Activated T-helper 2 cell treated with anti-CD3 and anti-CD28 coated beads, Interferon-gamma antibody, Interleukin-2, Interleukin-4, amounts not matched to agents 10 μg/mL and 5 μg/mL and 100 μg/mL, durations not matched to agents 14 hours and 24 hours and 36 hours (primary cell): ENCODE measurements at regions of chr17 and their contacts with region 1.

Region 1: DNA sequence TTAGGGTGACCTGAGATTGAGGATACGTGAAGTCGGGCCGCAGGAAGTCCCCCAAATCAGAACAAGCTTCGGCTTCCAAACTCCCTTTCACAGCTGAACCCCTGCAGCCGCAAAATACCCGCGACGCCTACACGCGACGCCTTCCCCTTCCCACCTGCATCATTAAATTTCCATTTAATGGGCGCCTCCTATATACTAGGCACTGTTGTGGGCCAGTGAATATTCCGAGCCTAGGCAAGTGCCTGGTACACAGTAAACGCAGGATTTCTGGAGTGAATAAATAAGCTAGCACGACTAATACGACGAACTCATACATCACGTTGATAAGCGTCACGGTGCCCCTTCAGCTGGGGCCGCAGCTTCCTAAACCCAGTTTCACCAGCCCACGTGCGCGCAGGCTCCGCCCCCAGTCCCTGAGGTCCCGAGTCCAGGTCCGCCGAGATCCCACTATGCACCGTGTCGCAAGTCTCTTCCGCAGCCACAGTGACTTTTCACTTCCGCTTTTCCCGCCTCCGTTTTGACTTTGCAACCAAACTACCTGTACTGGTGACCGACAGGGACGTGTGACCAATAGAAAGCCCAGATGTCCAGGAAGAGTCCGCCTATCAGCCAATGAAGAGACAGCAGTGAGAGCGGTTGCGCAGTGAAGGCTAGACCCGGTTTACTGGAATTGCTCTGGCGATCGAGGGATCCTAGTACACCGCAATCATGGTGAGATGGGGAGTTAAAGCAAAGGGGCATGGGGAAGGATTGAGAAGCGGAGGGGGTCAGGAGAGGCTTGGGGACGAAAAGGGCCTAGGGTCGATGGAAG is at the start of gene PSMB3:
- DNase-seq: peak; percentile 97
- H3K4me3 Mint-ChIP-seq: peak within 1 kb of the TSS; percentile 100
- H3K27ac Mint-ChIP-seq: peak within 1 kb of the TSS; percentile 99
- H3K4me1 Mint-ChIP-seq: peaks cover 31% of the 10 kb centered on the region
- H3K27me3 Mint-ChIP-seq: peaks cover 15% of the 10 kb centered on the region
- total RNA-seq, gene PSMB3: 337 and 342 TPM in 2 replicates

Region 2: DNA sequence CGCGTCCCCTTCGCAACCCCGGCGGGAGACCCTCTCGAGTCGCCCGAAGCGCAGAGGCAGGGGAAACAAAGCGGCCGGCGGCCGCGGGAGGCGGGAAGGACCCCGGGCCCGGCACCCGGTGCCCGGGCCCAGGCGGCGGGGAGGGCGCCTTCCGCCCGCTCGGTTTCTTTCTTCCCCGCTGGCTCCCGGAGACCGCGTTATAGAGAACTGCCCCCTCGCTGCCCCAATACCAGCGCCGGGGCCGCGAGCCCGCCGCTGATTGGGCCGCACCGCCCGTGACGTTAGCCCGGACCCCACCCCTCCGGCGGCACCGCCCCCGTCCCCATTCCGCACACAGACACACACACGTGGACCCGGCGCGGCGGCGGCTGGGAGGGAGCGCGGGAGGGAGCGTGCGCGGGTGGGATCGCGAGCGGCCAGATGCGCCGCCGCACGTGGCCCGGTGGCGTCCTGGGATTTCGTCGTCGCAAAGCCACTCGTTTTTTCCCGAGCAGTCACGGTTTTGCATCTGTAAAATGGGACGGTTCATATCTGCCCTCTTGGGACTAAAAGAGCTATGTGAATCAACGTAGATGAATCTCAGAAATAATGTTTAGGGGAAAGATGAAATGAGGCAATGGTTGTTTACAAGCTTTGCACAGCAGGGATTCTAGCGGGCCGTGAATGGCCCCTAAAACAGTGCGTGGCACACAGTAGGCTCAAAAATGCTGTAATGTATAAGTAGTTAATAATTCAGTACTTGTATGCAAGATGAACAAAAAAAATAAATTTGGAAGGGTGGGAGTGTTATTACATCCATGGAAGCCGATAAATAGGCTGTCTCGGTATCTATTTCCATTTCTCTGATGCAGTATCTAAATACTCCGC is 77.3 kb before region 1 on chr17 and contains the start of gene EPOP:
- intact Hi-C with region 1: loop called (anchors 2 kb)
- DNase-seq: peak; percentile 88
- H3K4me3 Mint-ChIP-seq: peak within 1 kb of the TSS; percentile 57
- H3K27ac Mint-ChIP-seq: peak within 1 kb of the TSS; percentile 70
- H3K4me1 Mint-ChIP-seq: peaks cover 37% of the 10 kb centered on the region
- H3K27me3 Mint-ChIP-seq: peaks cover 19% of the 10 kb centered on the region
- total RNA-seq, gene EPOP: 34.9 TPM in 2 replicates

Region 3: GRCh38 chr17:38735161-38735997 is 16.9 kb before region 1 on chr17:
- intact Hi-C with region 1: no loop called
- DNase-seq: peak; percentile 56
- H3K4me3 Mint-ChIP-seq: no peak overlapping the region
- H3K27ac Mint-ChIP-seq: no peak overlapping the region
- H3K4me1 Mint-ChIP-seq: peaks cover 36% of the 10 kb centered on the region
- H3K27me3 Mint-ChIP-seq: no peaks in the 10 kb centered on the region

Region 4: DNA sequence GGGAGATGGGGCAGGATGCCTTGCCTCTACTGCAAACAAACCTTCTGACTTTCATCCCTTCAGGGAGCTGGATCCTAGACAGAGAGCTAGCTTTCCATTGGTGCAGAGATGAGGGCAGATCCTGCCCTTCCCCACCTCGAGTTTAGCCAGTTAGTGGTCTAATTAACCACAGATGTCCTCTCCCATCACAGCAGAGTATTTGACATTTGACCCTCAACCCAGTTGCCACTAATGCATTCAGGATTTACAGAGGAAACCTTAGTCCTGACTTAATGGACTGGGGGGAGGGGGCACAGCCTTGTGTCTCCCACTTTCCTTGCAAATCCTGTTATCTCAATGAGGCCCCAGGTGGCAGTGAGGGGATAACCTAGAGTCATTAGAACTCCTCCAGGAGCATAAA is 36.9 kb after region 1 on chr17:
- intact Hi-C with region 1: no loop called
- DNase-seq: no peak
- H3K4me3 Mint-ChIP-seq: no peak overlapping the region
- H3K27ac Mint-ChIP-seq: no peak overlapping the region
- H3K4me1 Mint-ChIP-seq: peaks cover 2% of the 10 kb centered on the region
- H3K27me3 Mint-ChIP-seq: no peaks in the 10 kb centered on the region

Region 5: GRCh38 chr17:38799378-38800236 is 47.3 kb after region 1 on chr17 and contains the start of gene PIP4K2B:
- intact Hi-C with region 1: loop called (anchors 1 kb)
- DNase-seq: peak; percentile 86
- H3K4me3 Mint-ChIP-seq: peak within 1 kb of the TSS; percentile 98
- H3K27ac Mint-ChIP-seq: peak within 1 kb of the TSS; percentile 91
- H3K4me1 Mint-ChIP-seq: peaks cover 30% of the 10 kb centered on the region
- H3K27me3 Mint-ChIP-seq: no peaks in the 10 kb centered on the region
- total RNA-seq, gene PIP4K2B: 35.3 and 45.3 TPM in 2 replicates

Region 6: DNA sequence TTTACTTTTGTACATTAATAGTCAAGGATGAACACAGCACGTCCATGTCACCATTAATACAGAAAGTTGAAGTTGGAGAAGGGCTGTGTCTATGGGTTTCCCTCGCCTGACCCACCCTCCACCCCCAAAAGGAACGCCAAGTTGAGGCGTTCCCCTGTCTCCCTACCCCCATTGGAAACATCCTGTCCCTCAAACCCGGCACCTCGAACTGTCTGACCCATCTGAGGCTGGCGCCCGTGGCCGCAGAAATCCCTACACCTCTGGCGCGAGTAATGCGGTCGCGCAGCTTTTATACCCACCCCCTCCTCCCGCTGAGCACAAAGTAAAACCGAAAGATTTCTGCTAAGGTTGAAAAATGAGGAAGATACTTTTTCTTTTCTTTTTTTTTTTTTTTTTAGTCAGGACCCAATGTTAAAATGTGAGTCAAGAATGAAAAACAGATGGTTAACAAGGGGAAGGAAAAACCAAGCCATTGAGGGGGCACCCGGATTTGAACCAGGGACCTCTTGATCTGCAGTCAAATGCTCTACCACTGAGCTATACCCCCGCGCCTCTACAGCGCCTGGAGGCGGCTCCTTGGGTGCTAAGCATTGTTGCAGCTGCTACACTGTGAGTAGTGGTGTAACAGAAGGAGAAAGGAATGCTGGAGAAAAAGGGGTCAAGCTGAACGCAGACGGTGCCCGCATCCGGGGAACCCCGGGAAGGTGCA is 116.6 kb after region 1 on chr17:
- intact Hi-C with region 1: loop called (anchors 5 kb)
- DNase-seq: peak; percentile 82
- H3K4me3 Mint-ChIP-seq: peak overlapping the region; percentile 93
- H3K27ac Mint-ChIP-seq: peak overlapping the region; percentile 90
- H3K4me1 Mint-ChIP-seq: peaks cover 41% of the 10 kb centered on the region
- H3K27me3 Mint-ChIP-seq: no peaks in the 10 kb centered on the region